ENCODE measurements at regions of chr10 and their contacts with region 1.

Region 1: GRCh38 chr10:122210481-122211265 is 60.4 kb upstream of the BTBD16 start:
- DNase-seq: no peak
- H3K4me3 ChIP-seq: no peak overlapping the region
- H3K27ac ChIP-seq: no peak overlapping the region
- H3K4me1 ChIP-seq: no peaks in the 10 kb centered on the region
- H3K27me3 ChIP-seq: no peaks in the 10 kb centered on the region
- CTCF ChIP-seq: no peak
- POLR2A ChIP-seq: no peak

Region 2: DNA sequence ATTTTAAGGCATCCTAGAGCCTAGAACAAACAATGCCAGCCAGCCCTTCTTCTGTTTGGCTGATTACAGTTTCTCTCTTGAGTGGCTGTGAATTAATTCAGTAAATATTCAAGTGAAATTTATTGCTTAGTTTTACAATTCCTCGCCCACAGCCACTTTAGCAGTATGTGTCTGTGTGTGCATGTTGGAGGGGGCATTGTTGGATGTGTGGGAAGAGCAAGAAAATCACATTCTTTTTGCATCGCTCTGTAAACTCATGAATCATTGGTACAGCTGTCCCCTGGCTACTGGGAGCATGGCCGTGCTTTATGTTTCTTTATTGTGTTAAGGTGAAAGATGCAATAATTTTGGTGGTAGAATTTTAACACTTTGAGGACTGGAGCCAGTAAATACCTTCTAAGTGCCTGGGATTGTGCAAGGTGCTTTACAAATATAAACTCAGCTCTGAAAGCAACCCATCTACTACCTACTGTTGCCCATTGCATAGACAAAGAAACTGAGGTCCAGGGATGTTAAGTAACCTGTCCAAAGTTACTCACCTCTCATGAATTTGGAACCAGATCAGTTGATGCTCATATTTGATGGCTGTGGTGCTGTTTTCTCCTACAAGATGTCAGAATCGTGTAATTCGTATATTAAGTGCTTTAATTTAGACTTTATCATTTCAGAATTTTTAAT is 29.5 kb before region 1 on chr10:
- intact Hi-C with region 1: loop called (anchors 2 kb)
- DNase-seq: no peak
- H3K4me3 ChIP-seq: no peak overlapping the region
- H3K27ac ChIP-seq: no peak overlapping the region
- H3K4me1 ChIP-seq: no peaks in the 10 kb centered on the region
- H3K27me3 ChIP-seq: no peaks in the 10 kb centered on the region
- CTCF ChIP-seq: no peak
- POLR2A ChIP-seq: no peak